GM12878 (cell line): ENCODE measurements at regions of chr1 and their contacts with region 1.

Region 1: GRCh38 chr1:116139592-116140134 is 28.5 kb downstream of the MAB21L3 start:
- DNase-seq: no peak
- ATAC-seq: no peak
- H3K4me3 ChIP-seq: no peak overlapping the region
- H3K27ac ChIP-seq: no peak overlapping the region
- H3K4me1 ChIP-seq: peaks cover 2% of the 10 kb centered on the region; the same call in 1 of the 2 replicates
- H3K27me3 ChIP-seq: no peaks in the 10 kb centered on the region
- CTCF ChIP-seq: no peak
- EP300 ChIP-seq: no peak
- POLR2A ChIP-seq: no peak
- RAD21 ChIP-seq: no peak

Region 2: DNA sequence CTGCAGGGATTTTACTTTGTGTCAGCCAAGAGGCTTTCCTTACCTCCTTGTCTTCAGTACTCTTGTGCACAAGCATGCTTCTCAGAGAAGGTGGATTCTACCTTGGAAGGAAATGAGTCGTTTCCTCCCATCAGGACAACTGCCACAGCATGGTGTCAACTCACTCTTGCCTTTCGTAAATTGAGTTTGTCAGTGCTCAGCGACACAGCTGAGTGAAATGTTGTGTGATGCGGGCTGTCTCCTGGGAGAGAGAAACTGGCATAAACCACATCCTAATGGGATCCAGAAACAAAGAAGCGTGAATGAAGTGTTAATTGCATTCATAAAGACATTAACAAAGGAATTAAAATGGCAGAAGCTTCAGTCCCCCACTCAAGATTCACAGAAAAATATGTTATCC is 214.9 kb before region 1 on chr1:
- CTCF ChIA-PET with region 1: no interaction called
- POLR2A ChIA-PET with region 1: no interaction called
- RAD21 ChIA-PET with region 1: no interaction called
- SMC1A ChIA-PET with region 1: no interaction called
- in situ Hi-C with region 1: no loop called
- intact Hi-C with region 1: no loop called
- DNase-seq: no peak
- ATAC-seq: no peak
- H3K4me3 ChIP-seq: no peak overlapping the region
- H3K27ac ChIP-seq: no peak overlapping the region
- H3K4me1 ChIP-seq: no peaks in the 10 kb centered on the region
- H3K27me3 ChIP-seq: no peaks in the 10 kb centered on the region
- CTCF ChIP-seq: no peak
- EP300 ChIP-seq: no peak
- POLR2A ChIP-seq: no peak
- RAD21 ChIP-seq: no peak

Region 3: GRCh38 chr1:116020668-116021275 is 118.9 kb before region 1 on chr1:
- CTCF ChIA-PET with region 1: interaction called, 16 read pairs
- POLR2A ChIA-PET with region 1: no interaction called
- RAD21 ChIA-PET with region 1: interaction called, 3 read pairs
- SMC1A ChIA-PET with region 1: no interaction called
- in situ Hi-C with region 1: no loop called
- intact Hi-C with region 1: no loop called
- DNase-seq: no peak
- ATAC-seq: peak; percentile 97
- H3K4me3 ChIP-seq: no peak overlapping the region
- H3K27ac ChIP-seq: no peak overlapping the region
- H3K4me1 ChIP-seq: no peaks in the 10 kb centered on the region
- H3K27me3 ChIP-seq: no peaks in the 10 kb centered on the region
- CTCF ChIP-seq: peak; percentile 72 to 85 (median 79)
- EP300 ChIP-seq: no peak
- POLR2A ChIP-seq: no peak
- RAD21 ChIP-seq: peak; percentile 70

Region 4: DNA sequence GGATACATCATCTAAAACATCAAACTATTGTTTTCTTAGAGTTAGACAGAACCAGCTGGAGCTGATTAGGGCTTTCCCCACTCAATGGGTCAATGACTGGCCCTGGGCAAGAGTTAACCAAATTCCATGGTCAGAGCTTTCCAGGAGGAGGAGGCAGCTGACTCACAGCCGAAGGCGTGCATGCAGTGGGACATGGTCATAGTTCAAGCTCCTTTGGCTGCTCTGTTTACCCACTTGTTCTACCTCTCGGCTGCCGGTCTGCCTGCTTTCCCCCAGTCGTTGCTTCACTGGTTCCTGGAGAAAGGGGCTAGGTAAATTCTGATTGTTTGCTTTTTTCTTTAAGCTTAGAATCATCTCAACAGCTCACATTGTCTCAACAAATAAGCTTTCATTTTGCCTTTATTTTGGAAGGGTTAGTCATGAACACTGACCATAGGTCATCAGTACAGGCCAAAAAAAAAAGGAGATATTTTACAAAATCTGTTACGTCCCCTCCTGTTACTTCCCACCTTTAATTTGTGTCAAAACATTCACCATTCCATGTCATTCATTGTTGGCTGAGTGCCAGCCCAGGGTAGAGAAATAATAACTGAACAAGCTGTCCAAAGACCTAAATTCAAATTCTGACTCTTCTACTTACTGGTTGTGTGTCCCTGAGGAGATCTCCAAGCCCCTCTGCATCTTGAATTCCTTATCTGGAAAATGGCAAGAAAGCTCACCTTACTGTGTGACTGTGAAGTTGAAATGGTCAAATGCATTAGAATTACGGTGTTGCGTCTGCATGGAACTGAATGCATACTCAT is 16.5 kb before region 1 on chr1:
- CTCF ChIA-PET with region 1: interaction called, 20 read pairs
- POLR2A ChIA-PET with region 1: no interaction called
- RAD21 ChIA-PET with region 1: interaction called, 4 read pairs
- SMC1A ChIA-PET with region 1: interaction called, 8 read pairs
- in situ Hi-C with region 1: no loop called
- intact Hi-C with region 1: no loop called
- DNase-seq: no peak
- ATAC-seq: no peak
- H3K4me3 ChIP-seq: no peak overlapping the region
- H3K27ac ChIP-seq: no peak overlapping the region
- H3K4me1 ChIP-seq: no peaks in the 10 kb centered on the region
- H3K27me3 ChIP-seq: no peaks in the 10 kb centered on the region
- CTCF ChIP-seq: no peak
- EP300 ChIP-seq: no peak
- POLR2A ChIP-seq: no peak
- RAD21 ChIP-seq: no peak

Region 5: GRCh38 chr1:116168277-116169097 is 28.8 kb after region 1 on chr1:
- CTCF ChIA-PET with region 1: interaction called, 16 read pairs
- POLR2A ChIA-PET with region 1: interaction called, 5 read pairs
- RAD21 ChIA-PET with region 1: interaction called, 11 read pairs
- SMC1A ChIA-PET with region 1: interaction called, 5 read pairs
- in situ Hi-C with region 1: no loop called
- intact Hi-C with region 1: no loop called
- DNase-seq: no peak
- ATAC-seq: peak; percentile 98
- H3K4me3 ChIP-seq: peak overlapping the region; percentile 66
- H3K27ac ChIP-seq: no peak overlapping the region
- H3K4me1 ChIP-seq: no peaks in the 10 kb centered on the region
- H3K27me3 ChIP-seq: no peaks in the 10 kb centered on the region; a peak in 2 of 4 replicates
- CTCF ChIP-seq: peak; percentile 75 to 87 (median 84)
- EP300 ChIP-seq: no peak
- POLR2A ChIP-seq: no peak
- RAD21 ChIP-seq: peak; percentile 37; the same call in 1 of the 2 replicates

Region 6: GRCh38 chr1:116360429-116361173 is 220.9 kb after region 1 on chr1:
- CTCF ChIA-PET with region 1: interaction called, 11 read pairs
- POLR2A ChIA-PET with region 1: no interaction called
- RAD21 ChIA-PET with region 1: no interaction called
- SMC1A ChIA-PET with region 1: interaction called, 3 read pairs
- in situ Hi-C with region 1: no loop called
- intact Hi-C with region 1: no loop called
- DNase-seq: no peak
- ATAC-seq: peak; percentile 70
- H3K4me3 ChIP-seq: no peak overlapping the region
- H3K27ac ChIP-seq: no peak overlapping the region
- H3K4me1 ChIP-seq: no peaks in the 10 kb centered on the region
- H3K27me3 ChIP-seq: no peaks in the 10 kb centered on the region
- CTCF ChIP-seq: peak; percentile 21 to 44 (median 32); a peak in 2 of 6 replicates
- EP300 ChIP-seq: no peak
- POLR2A ChIP-seq: no peak
- RAD21 ChIP-seq: peak; percentile 64

Region 7: GRCh38 chr1:116418091-116418830 is 278.6 kb after region 1 on chr1:
- CTCF ChIA-PET with region 1: interaction called, 10 read pairs
- POLR2A ChIA-PET with region 1: no interaction called
- RAD21 ChIA-PET with region 1: interaction called, 4 read pairs
- SMC1A ChIA-PET with region 1: no interaction called
- in situ Hi-C with region 1: no loop called
- intact Hi-C with region 1: no loop called
- DNase-seq: peak; percentile 51
- ATAC-seq: peak; percentile 96
- H3K4me3 ChIP-seq: peak overlapping the region; percentile 96
- H3K27ac ChIP-seq: peak overlapping the region; percentile 89
- H3K4me1 ChIP-seq: peaks cover 11% of the 10 kb centered on the region
- H3K27me3 ChIP-seq: no peaks in the 10 kb centered on the region
- CTCF ChIP-seq: no peak
- EP300 ChIP-seq: no peak
- POLR2A ChIP-seq: peak; percentile 100
- RAD21 ChIP-seq: no peak

Region 8: DNA sequence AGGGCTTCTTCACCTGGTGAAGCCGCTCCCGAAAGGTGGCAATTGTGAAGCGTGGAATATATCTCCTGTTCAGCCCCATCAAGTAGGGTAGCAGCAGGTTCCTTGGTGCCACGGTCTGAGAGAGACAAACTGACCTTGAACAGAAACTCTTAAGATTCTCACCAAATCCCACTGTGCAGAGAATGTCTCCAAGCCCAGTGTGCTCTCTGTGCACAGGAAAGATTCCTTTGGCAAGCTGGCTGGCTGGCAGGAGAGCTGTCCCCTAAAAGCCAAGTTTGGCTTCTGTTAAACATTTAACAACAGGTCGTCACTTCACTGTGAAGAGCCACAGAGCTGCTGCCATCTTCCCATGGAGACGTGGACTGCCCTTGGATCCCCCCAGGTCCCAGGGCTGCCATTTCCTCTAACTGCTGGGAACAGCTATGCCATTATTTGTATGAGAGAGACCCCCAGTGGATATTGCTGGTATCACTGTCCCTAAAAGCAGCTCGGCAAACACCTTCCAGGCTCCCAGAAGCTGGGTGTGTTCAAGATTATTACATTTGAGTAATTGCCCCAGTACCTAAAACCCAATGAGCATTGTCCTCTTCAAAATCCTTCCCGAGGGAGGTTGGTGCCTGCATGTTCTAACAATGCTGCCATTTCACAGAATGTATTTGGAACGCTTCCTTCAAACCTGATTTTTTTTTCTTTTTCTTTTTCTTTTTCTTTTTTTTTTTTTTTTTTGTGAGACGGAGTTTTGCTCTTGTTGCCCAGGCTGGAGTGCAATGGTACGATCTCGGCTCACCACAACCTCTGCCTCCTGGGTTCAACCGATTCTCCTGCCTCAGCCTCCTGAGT is 359.3 kb after region 1 on chr1:
- CTCF ChIA-PET with region 1: interaction called, 103 read pairs
- POLR2A ChIA-PET with region 1: interaction called, 8 read pairs
- RAD21 ChIA-PET with region 1: interaction called, 61 read pairs
- SMC1A ChIA-PET with region 1: interaction called, 36 read pairs
- in situ Hi-C with region 1: no loop called
- intact Hi-C with region 1: no loop called
- DNase-seq: no peak
- ATAC-seq: peak; percentile 85
- H3K4me3 ChIP-seq: no peak overlapping the region
- H3K27ac ChIP-seq: no peak overlapping the region
- H3K4me1 ChIP-seq: peaks cover 11% of the 10 kb centered on the region
- H3K27me3 ChIP-seq: no peaks in the 10 kb centered on the region
- CTCF ChIP-seq: peak; percentile 79 to 86 (median 79); a peak in 5 of 6 replicates
- EP300 ChIP-seq: no peak
- POLR2A ChIP-seq: no peak
- RAD21 ChIP-seq: peak; percentile 92

Region 9: GRCh38 chr1:116951200-116951935 is 811.7 kb after region 1 on chr1:
- CTCF ChIA-PET with region 1: no interaction called
- POLR2A ChIA-PET with region 1: no interaction called
- RAD21 ChIA-PET with region 1: no interaction called
- SMC1A ChIA-PET with region 1: no interaction called
- in situ Hi-C with region 1: no loop called
- intact Hi-C with region 1: no loop called
- DNase-seq: no peak
- ATAC-seq: no peak
- H3K4me3 ChIP-seq: no peak overlapping the region
- H3K27ac ChIP-seq: no peak overlapping the region
- H3K4me1 ChIP-seq: no peaks in the 10 kb centered on the region
- H3K27me3 ChIP-seq: no peaks in the 10 kb centered on the region; a peak in 1 of 4 replicates
- CTCF ChIP-seq: no peak
- EP300 ChIP-seq: no peak
- POLR2A ChIP-seq: no peak
- RAD21 ChIP-seq: no peak